SK-N-SH (cell line): ENCODE measurements at regions of chr14 and their contacts with region 1.

Region 1: DNA sequence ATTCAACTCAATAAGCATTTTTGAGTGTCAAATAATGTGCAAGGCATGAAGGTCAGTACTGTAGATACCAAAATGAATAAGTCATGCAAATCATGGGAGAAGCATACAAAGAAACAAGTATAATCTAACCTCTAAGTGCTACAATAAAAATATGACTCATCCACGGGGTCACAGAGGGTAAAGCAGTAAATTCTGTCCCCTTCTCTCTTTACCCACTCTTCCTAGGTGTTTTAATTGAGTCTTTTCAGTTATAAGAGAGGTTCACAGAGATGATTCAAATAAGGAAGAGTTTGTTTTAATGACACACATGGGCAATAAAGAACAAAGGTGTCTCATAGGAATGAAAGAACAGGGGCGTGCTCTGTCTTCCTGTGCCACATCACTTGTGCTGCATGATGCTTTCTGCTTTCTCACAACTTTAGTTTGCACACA is 71.5 kb upstream of the DAAM1 start:
- DNase-seq: no peak
- H3K4me3 ChIP-seq: no peak overlapping the region
- H3K27ac ChIP-seq: peak overlapping the region in 1 of 2 experiments; percentile 48; a peak in 1 of 4 replicates
- H3K4me1 ChIP-seq: peaks cover 0 to 3% of the 10 kb centered on the region in 2 experiments; a peak in 1 of 4 replicates
- H3K27me3 ChIP-seq: no peaks in the 10 kb centered on the region
- CTCF ChIP-seq: no peak
- EP300 ChIP-seq: no peak
- RAD21 ChIP-seq: no peak

Region 2: DNA sequence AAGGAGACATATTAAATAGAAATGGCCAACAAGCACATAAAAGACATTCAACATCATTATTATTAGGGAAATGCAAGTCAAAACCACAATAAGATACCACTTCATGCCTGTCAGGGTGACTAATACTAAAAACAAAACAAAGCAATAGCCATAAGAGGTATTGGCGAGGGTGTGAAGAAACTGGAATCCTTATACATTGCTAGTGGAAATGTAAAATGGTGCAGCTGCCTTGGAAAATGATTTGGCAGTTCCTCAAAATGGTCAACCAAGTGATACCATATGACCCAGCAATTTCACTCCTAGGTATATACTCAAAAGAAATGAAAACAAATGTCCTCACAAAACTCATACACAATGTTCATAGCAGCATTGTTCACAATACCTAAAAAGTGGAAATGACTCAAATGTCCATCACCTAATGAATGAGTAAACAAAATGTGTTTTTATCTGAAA is 321.2 kb after region 1 on chr14:
- CTCF ChIA-PET with region 1: interaction called, 12 read pairs
- POLR2A ChIA-PET with region 1: no interaction called
- DNase-seq: no peak
- H3K4me3 ChIP-seq: no peak overlapping the region
- H3K27ac ChIP-seq: peak overlapping the region in 1 of 2 experiments; percentile 65; a peak in 3 of 4 replicates
- H3K4me1 ChIP-seq: peaks cover 0 to 21% of the 10 kb centered on the region in 2 experiments; a peak in 3 of 4 replicates
- H3K27me3 ChIP-seq: no peaks in the 10 kb centered on the region
- CTCF ChIP-seq: no peak
- EP300 ChIP-seq: no peak
- RAD21 ChIP-seq: no peak